MCF 10A (cell line): ENCODE measurements at regions of chr9 and their contacts with region 1.

Region 1: GRCh38 chr9:126500684-126501382 is 112.9 kb upstream of the LMX1B start:
- DNase-seq: peak; percentile 70
- H3K4me3 Mint-ChIP-seq: no peak overlapping the region
- H3K27ac Mint-ChIP-seq: no peak overlapping the region
- H3K4me1 Mint-ChIP-seq: no peaks in the 10 kb centered on the region
- H3K27me3 Mint-ChIP-seq: no peaks in the 10 kb centered on the region
- CTCF ChIP-seq: peak; percentile 98

Region 2: DNA sequence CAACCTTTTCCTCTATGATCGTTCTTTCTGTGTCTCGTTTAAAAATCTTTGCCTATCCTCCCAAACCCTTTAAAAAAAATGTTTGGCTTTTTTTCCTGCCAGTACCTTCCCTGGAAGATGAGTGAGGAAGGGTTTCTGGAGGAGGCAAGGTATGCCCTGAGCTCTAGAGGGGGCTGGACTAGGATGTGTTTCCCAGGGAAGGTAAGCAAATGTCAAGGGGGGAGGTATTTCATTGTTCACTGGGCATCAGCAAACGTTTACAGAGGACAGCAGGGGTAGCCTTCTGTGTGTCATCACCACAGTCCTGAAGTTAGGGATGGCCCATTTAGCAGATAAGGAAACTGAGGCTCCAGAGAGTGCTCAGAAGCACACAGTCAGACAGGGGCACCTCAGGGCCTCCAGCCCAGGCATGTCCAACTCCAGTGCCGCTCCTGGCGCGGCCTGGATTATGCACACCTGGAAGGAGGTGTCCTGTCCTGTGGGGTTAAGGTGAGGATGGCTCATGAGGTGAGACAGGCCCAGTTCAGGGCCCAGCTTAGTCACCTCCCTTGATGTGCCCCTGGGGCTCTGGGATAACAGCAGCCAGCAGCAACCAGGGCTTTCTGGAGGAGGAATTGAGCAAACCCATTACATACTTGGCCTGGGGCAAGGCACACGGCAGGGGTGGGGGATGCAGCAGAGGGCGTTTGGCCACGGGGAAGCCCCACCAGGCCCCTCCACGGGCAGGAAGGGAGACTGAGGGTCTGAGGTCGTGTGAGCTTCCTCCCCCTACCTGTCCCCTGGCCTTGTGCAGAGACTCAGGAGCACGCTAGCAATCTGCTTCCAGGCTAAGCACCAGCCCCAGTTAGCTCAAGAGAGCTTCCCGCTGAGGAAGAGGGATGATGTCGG is 12.6 kb after region 1 on chr9:
- CTCF ChIA-PET with region 1: interaction called, 53 read pairs
- POLR2A ChIA-PET with region 1: interaction called, 4 read pairs
- intact Hi-C with region 1: no loop called
- DNase-seq: peak; percentile 67
- H3K4me3 Mint-ChIP-seq: no peak overlapping the region
- H3K27ac Mint-ChIP-seq: no peak overlapping the region
- H3K4me1 Mint-ChIP-seq: peaks cover 19% of the 10 kb centered on the region
- H3K27me3 Mint-ChIP-seq: no peaks in the 10 kb centered on the region
- CTCF ChIP-seq: no peak

Region 3: DNA sequence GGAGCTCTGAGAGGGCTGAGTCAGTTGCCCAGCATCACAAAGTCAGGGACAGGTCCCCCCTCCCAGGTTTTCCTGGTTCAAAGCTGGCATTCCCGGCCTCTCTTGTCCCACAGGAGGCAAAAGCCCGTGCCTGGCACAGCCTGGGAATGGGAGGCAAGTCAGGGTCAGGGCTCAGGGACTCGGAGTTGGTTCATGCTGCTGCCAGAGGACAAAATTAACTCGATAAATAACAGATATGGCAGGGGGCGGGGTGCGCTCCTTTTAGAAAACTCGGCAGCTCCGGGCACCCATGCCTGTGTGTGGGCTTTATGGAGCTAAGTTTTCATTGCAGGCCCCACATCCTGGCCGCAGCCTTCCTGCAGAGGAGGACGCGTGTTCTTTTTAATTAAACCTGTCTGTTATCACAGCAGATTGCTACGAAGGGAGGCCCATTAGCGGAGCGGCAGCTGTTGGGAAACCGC is 50.1 kb after region 1 on chr9:
- CTCF ChIA-PET with region 1: interaction called, 217 read pairs
- POLR2A ChIA-PET with region 1: no interaction called
- intact Hi-C with region 1: no loop called
- DNase-seq: no peak
- H3K4me3 Mint-ChIP-seq: no peak overlapping the region
- H3K27ac Mint-ChIP-seq: no peak overlapping the region
- H3K4me1 Mint-ChIP-seq: no peaks in the 10 kb centered on the region
- H3K27me3 Mint-ChIP-seq: no peaks in the 10 kb centered on the region
- CTCF ChIP-seq: no peak

Region 4: DNA sequence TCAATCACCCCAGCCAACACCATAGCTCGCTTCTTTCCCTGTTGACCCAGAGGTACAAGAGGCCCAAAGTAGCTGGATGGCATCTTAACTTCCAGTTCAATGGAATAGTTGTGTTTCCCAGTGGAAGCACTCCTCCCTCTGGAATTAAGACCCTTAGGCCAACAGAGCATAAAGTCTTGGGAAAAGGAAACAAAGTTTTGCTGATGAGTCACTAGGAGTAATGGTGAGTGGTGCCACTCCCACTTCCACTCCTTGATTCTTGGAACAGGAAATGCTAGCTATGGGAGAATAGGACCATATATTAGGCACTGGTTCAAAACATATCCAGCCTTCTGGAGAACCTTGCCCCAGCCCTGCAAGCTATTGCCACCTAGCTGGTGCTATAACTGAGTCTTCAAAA is 68.2 kb after region 1 on chr9:
- CTCF ChIA-PET with region 1: interaction called, 27 read pairs
- POLR2A ChIA-PET with region 1: no interaction called
- intact Hi-C with region 1: no loop called
- DNase-seq: peak; percentile 76
- H3K4me3 Mint-ChIP-seq: no peak overlapping the region
- H3K27ac Mint-ChIP-seq: no peak overlapping the region
- H3K4me1 Mint-ChIP-seq: peaks cover 7% of the 10 kb centered on the region
- H3K27me3 Mint-ChIP-seq: peaks cover 20% of the 10 kb centered on the region
- CTCF ChIP-seq: no peak

Region 5: GRCh38 chr9:126781186-126782052 is 280.6 kb after region 1 on chr9:
- CTCF ChIA-PET with region 1: interaction called, 6 read pairs
- POLR2A ChIA-PET with region 1: no interaction called
- intact Hi-C with region 1: loop called (anchors 2 kb)
- DNase-seq: peak; percentile 79
- H3K4me3 Mint-ChIP-seq: no peak overlapping the region
- H3K27ac Mint-ChIP-seq: no peak overlapping the region
- H3K4me1 Mint-ChIP-seq: peaks cover 5% of the 10 kb centered on the region
- H3K27me3 Mint-ChIP-seq: no peaks in the 10 kb centered on the region
- CTCF ChIP-seq: peak; percentile 97